ENCODE measurements at regions of chr2 and their contacts with region 1.

Region 1: DNA sequence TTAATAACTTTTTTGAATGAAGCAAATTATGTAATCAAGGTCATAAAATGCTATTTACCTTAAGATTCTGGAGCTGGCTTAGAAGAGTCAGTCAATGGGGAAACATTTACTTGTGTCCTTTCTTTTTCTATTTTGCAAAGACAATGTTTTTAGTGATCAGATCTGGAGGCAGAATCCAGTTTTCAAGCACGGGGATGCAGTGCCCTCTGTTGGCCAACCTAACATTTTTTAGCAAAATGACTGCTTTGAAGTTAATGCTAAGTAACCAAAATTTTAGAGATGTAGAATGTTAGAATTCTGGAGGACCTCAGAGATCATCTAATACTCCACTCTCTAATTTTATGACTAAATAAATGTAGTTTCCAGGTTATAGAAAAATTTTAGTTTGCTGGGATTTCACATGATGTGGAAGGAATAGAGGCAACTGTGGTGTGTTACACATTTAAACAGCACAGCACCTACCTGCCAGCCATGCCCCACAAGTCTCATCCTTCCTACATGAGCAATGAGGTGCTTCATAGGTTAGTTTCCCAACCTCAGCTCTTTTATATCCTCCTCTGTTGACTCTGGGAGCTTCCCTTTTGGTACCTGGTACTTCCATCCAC is 23.6 kb upstream of the SLC9A4 start:
- DNase-seq: peak; percentile 62
- H3K4me3 Mint-ChIP-seq: no peak overlapping the region
- H3K27ac Mint-ChIP-seq: no peak overlapping the region
- H3K4me1 Mint-ChIP-seq: no peaks in the 10 kb centered on the region
- H3K27me3 Mint-ChIP-seq: no peaks in the 10 kb centered on the region
- CTCF ChIP-seq: peak; percentile 21

Region 2: GRCh38 chr2:102558463-102558862 is 109.0 kb after region 1 on chr2:
- CTCF ChIA-PET with region 1: no interaction called
- intact Hi-C with region 1: no loop called
- DNase-seq: no peak
- H3K4me3 Mint-ChIP-seq: no peak overlapping the region
- H3K27ac Mint-ChIP-seq: no peak overlapping the region
- H3K4me1 Mint-ChIP-seq: no peaks in the 10 kb centered on the region
- H3K27me3 Mint-ChIP-seq: no peaks in the 10 kb centered on the region
- CTCF ChIP-seq: no peak

Region 3: DNA sequence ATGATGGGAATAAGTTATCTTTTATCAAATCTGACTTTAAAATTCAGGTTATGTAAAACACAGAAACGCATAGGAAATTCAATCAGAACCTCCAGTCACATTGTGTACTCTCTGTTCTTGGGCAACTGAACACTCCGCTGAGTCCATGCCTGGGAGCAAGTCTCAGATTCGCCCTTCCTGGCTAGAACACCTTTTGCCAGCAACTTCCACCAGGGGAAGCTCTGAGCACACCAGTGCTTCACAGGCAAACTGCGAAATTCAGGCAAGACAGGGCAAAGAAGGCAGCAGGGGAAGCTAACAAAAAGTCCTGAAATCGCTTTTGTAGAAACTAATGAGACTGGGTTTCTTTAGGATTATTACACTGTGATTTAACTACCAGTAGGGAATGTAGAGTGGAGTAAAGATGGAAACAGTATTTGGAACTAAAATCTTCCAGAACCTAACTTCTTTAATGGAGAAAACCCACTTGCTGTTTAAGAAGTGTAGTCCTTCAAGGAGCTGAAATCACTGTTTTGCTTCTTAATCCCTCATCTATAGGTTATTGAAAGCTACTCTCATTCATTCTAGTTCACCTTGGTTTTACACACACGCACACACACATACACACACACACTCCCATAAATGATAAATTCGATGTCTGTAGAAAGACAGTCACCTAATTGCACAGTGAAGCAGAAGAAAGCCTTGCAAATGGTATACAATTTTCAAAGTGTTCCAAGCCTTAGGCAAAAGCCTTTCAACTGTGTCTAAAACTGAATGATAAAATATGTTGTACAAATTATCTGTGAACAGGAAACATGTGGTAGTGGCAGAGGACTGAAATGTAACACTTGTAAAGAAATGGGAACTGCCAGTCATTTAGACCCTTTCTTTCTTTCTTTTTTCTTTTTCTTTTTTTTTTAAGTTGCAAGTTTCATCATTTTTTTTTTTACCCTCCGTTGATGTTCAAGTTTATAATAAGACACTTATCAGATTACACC is 526.8 kb after region 1 on chr2:
- CTCF ChIA-PET with region 1: interaction called, 10 read pairs
- intact Hi-C with region 1: no loop called
- DNase-seq: peak; percentile 15
- H3K4me3 Mint-ChIP-seq: no peak overlapping the region
- H3K27ac Mint-ChIP-seq: no peak overlapping the region
- H3K4me1 Mint-ChIP-seq: no peaks in the 10 kb centered on the region
- H3K27me3 Mint-ChIP-seq: no peaks in the 10 kb centered on the region
- CTCF ChIP-seq: peak; percentile 39

Measured in Calu3 (cell line).